ENCODE measurements at regions of chr1 and their contacts with region 1.

Region 1: GRCh38 chr1:15323351-15323988 is 76.4 kb downstream of the FHAD1 start:
- DNase-seq: peak; percentile 46 to 85 (median 75)
- ATAC-seq: peak; percentile 84
- H3K4me3 ChIP-seq: no peak overlapping the region
- H3K4me3 Mint-ChIP-seq: no peak overlapping the region
- H3K27ac ChIP-seq: no peak overlapping the region
- H3K27ac Mint-ChIP-seq: no peak overlapping the region
- H3K4me1 ChIP-seq: no peaks in the 10 kb centered on the region
- H3K4me1 Mint-ChIP-seq: peaks cover 2% of the 10 kb centered on the region
- H3K27me3 ChIP-seq: no peaks in the 10 kb centered on the region
- H3K27me3 Mint-ChIP-seq: no peaks in the 10 kb centered on the region
- CTCF ChIP-seq: peak; percentile 96

Region 2: DNA sequence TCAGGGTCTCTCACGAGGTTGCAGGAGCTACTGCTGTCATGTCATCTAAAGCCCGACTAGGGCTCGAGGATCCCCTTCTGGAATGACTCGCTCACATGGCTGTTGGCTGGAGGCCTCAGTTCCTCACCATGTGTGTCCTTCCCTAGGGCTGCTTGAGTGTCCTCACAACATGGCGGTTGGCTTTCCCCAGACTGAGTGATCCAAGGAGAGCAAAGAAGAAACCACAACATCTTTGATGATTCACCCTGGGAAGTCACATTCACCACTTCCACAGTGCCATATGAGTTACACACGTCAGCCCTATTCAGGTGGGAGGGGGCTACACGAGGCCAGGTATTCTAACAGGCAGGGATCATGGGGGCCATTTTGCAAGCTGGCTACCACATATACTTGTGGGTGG is 11.6 kb before region 1 on chr1:
- CTCF ChIA-PET with region 1: interaction called, 23 read pairs
- POLR2A ChIA-PET with region 1: no interaction called
- intact Hi-C with region 1: no loop called
- DNase-seq: no peak
- ATAC-seq: no peak
- H3K4me3 ChIP-seq: no peak overlapping the region
- H3K4me3 Mint-ChIP-seq: no peak overlapping the region
- H3K27ac ChIP-seq: no peak overlapping the region
- H3K27ac Mint-ChIP-seq: no peak overlapping the region
- H3K4me1 ChIP-seq: no peaks in the 10 kb centered on the region
- H3K4me1 Mint-ChIP-seq: no peaks in the 10 kb centered on the region
- H3K27me3 ChIP-seq: no peaks in the 10 kb centered on the region
- H3K27me3 Mint-ChIP-seq: peaks cover 2% of the 10 kb centered on the region
- CTCF ChIP-seq: no peak

Region 3: GRCh38 chr1:15364740-15365139 is 41.3 kb after region 1 on chr1:
- CTCF ChIA-PET with region 1: interaction called, 4 read pairs
- POLR2A ChIA-PET with region 1: no interaction called
- intact Hi-C with region 1: loop called in 1 of 2 experiments (anchors 1 kb)
- DNase-seq: peak in 2 of 9 experiments; percentile 40 to 55
- ATAC-seq: no peak
- H3K4me3 ChIP-seq: no peak overlapping the region
- H3K4me3 Mint-ChIP-seq: no peak overlapping the region
- H3K27ac ChIP-seq: no peak overlapping the region
- H3K27ac Mint-ChIP-seq: no peak overlapping the region
- H3K4me1 ChIP-seq: no peaks in the 10 kb centered on the region
- H3K4me1 Mint-ChIP-seq: no peaks in the 10 kb centered on the region
- H3K27me3 ChIP-seq: no peaks in the 10 kb centered on the region
- H3K27me3 Mint-ChIP-seq: peaks cover 2% of the 10 kb centered on the region
- CTCF ChIP-seq: no peak

Region 4: GRCh38 chr1:15409388-15410222 is 86.1 kb after region 1 on chr1 and contains the start of gene EFHD2:
- CTCF ChIA-PET with region 1: interaction called, 12 read pairs
- POLR2A ChIA-PET with region 1: no interaction called
- intact Hi-C with region 1: no loop called
- DNase-seq: peak; percentile 73 to 99 (median 85)
- ATAC-seq: peak; percentile 76
- H3K4me3 ChIP-seq: peak within 1 kb of the TSS; percentile 79 to 95
- H3K4me3 Mint-ChIP-seq: peak within 1 kb of the TSS; percentile 92
- H3K27ac ChIP-seq: peak within 1 kb of the TSS; percentile 74 to 99
- H3K27ac Mint-ChIP-seq: peak within 1 kb of the TSS; percentile 97
- H3K4me1 ChIP-seq: peaks cover 48% of the 10 kb centered on the region
- H3K4me1 Mint-ChIP-seq: peaks cover 49% of the 10 kb centered on the region
- H3K27me3 ChIP-seq: no peaks in the 10 kb centered on the region
- H3K27me3 Mint-ChIP-seq: no peaks in the 10 kb centered on the region
- CTCF ChIP-seq: no peak
- total RNA-seq, gene EFHD2: 81.2 to 87.9 TPM

Region 5: GRCh38 chr1:15430787-15431570 is 107.5 kb after region 1 on chr1:
- CTCF ChIA-PET with region 1: interaction called, 227 read pairs
- POLR2A ChIA-PET with region 1: interaction called, 3 read pairs
- intact Hi-C with region 1: loop called in 1 of 2 experiments (anchors 1 kb)
- DNase-seq: peak; percentile 65 to 87 (median 78)
- ATAC-seq: peak; percentile 81
- H3K4me3 ChIP-seq: no peak overlapping the region
- H3K4me3 Mint-ChIP-seq: no peak overlapping the region
- H3K27ac ChIP-seq: peak overlapping the region in 1 of 2 experiments; percentile 31
- H3K27ac Mint-ChIP-seq: peak overlapping the region; percentile 10
- H3K4me1 ChIP-seq: no peaks in the 10 kb centered on the region
- H3K4me1 Mint-ChIP-seq: no peaks in the 10 kb centered on the region
- H3K27me3 ChIP-seq: no peaks in the 10 kb centered on the region
- H3K27me3 Mint-ChIP-seq: no peaks in the 10 kb centered on the region
- CTCF ChIP-seq: peak; percentile 98

Region 6: DNA sequence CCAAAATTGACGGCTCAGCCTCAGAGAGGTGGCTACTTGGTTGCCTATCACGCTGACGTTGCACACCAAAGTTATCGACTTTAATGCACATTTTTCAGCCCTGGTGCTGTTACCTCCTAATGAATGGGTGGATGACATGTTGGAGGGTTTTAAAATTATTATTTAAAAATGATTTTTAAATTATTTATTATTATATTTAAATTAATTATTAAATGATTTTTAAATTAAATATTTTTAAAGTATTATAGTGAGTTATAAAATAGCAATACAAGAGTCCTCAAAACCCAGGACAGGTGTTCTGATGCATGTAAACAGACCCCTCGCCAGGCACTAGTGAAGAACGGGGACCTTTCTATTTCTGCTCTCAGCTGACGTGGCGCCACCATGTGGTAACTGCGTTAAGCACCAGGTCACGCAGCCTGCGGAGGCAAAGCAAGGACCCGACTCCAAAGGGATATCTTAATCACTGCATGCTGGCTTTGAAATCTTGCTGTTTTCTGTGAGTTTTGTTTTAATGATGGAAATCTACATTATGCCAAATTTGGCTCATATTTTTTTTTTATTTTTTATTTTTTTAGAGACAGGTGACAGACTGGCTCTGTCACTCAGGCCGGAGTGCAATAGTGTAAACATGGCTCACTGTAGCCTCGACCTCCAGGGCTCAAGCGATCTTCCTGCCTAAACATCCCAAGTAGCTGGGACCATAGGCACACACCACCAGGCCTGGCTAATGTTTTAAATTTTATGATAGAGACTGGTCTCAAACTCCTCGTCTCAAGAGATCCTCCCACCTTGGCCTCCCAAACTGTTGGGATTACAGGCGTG is 177.9 kb after region 1 on chr1:
- CTCF ChIA-PET with region 1: no interaction called
- POLR2A ChIA-PET with region 1: no interaction called
- intact Hi-C with region 1: no loop called
- DNase-seq: peak in 7 of 9 experiments; percentile 7 to 57 (median 44)
- ATAC-seq: peak; percentile 40
- H3K4me3 ChIP-seq: no peak overlapping the region
- H3K4me3 Mint-ChIP-seq: no peak overlapping the region
- H3K27ac ChIP-seq: no peak overlapping the region
- H3K27ac Mint-ChIP-seq: no peak overlapping the region
- H3K4me1 ChIP-seq: no peaks in the 10 kb centered on the region
- H3K4me1 Mint-ChIP-seq: no peaks in the 10 kb centered on the region
- H3K27me3 ChIP-seq: no peaks in the 10 kb centered on the region
- H3K27me3 Mint-ChIP-seq: no peaks in the 10 kb centered on the region
- CTCF ChIP-seq: peak; percentile 59

Measured in CD8-positive, alpha-beta T cell (primary cell).